IMR-90 (cell line): ENCODE measurements at regions of chr2 and their contacts with region 1.

Region 1: GRCh38 chr2:118865106-118865505 is 17.7 kb upstream of the EN1 start:
- DNase-seq: peak; percentile 46
- ATAC-seq: peak; percentile 92
- H3K4me3 ChIP-seq: no peak overlapping the region
- H3K27ac ChIP-seq: no peak overlapping the region
- H3K4me1 ChIP-seq: no peaks in the 10 kb centered on the region
- H3K27me3 ChIP-seq: peaks cover 20% of the 10 kb centered on the region
- CTCF ChIP-seq: peak; percentile 65
- POLR2A ChIP-seq: no peak
- RAD21 ChIP-seq: peak; percentile 70

Region 2: DNA sequence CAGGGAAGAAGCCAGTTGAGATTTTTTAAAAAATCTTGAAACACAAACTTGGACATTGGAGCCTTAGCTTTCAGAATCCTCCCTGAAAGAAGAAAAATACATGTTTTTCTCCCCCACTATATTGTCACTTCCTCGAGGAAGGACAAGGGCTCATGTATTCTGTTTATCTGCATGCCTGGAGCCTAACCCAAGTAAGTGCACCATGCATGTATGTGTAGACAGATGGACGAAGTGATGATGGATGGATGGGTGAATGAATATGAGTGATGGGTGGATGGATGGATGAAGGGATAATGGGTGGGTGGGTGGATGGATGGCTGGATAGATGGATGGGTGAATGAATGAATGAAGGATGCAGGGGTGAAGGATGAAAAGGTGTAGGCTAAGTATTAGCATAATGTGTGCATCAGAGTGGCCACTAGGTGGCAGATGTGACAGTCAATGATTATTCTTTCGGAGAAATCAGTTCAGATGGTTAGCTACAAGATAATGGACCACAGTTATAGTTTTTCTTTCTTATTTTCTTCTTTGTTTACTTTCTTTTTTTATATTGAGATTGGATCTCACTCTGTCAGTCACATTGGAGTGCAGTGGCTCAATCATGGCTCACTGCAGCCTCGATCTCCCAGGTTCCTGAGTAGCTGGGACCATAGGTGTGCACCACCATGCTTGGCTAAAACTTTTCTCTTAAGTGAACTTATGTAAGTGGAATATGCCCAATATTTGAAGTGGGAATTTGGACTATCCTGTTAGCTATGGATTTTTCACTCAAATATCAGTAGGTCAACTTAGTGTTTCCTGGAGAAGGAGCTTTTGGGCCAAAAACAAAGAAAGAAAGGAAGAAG is 832.7 kb before region 1 on chr2:
- CTCF ChIA-PET with region 1: no interaction called
- POLR2A ChIA-PET with region 1: no interaction called
- dilution Hi-C with region 1: no loop called
- in situ Hi-C with region 1: loop called (anchors 25 kb)
- intact Hi-C with region 1: loop called (anchors 1 kb)
- DNase-seq: peak; percentile 34
- ATAC-seq: peak; percentile 90
- H3K4me3 ChIP-seq: no peak overlapping the region
- H3K27ac ChIP-seq: no peak overlapping the region
- H3K4me1 ChIP-seq: no peaks in the 10 kb centered on the region
- H3K27me3 ChIP-seq: peaks cover 5% of the 10 kb centered on the region
- CTCF ChIP-seq: peak; percentile 69
- POLR2A ChIP-seq: no peak
- RAD21 ChIP-seq: peak; percentile 41

Region 3: GRCh38 chr2:118046634-118047210 is 818.4 kb before region 1 on chr2:
- CTCF ChIA-PET with region 1: no interaction called
- POLR2A ChIA-PET with region 1: no interaction called
- dilution Hi-C with region 1: no loop called
- in situ Hi-C with region 1: loop called (anchors 25 kb)
- intact Hi-C with region 1: loop called (anchors 2 kb)
- DNase-seq: peak; percentile 53
- ATAC-seq: peak; percentile 81
- H3K4me3 ChIP-seq: no peak overlapping the region
- H3K27ac ChIP-seq: no peak overlapping the region
- H3K4me1 ChIP-seq: no peaks in the 10 kb centered on the region
- H3K27me3 ChIP-seq: peaks cover 21% of the 10 kb centered on the region
- CTCF ChIP-seq: peak; percentile 69
- POLR2A ChIP-seq: no peak
- RAD21 ChIP-seq: peak; percentile 69

Region 4: GRCh38 chr2:118221666-118222594 is 643.2 kb before region 1 on chr2:
- CTCF ChIA-PET with region 1: no interaction called
- POLR2A ChIA-PET with region 1: no interaction called
- dilution Hi-C with region 1: no loop called
- in situ Hi-C with region 1: no loop called
- intact Hi-C with region 1: loop called (anchors 1 kb)
- DNase-seq: peak; percentile 76
- ATAC-seq: peak; percentile 96
- H3K4me3 ChIP-seq: no peak overlapping the region
- H3K27ac ChIP-seq: no peak overlapping the region
- H3K4me1 ChIP-seq: no peaks in the 10 kb centered on the region
- H3K27me3 ChIP-seq: peaks cover 43% of the 10 kb centered on the region
- CTCF ChIP-seq: peak; percentile 82
- POLR2A ChIP-seq: no peak
- RAD21 ChIP-seq: peak; percentile 77

Region 5: DNA sequence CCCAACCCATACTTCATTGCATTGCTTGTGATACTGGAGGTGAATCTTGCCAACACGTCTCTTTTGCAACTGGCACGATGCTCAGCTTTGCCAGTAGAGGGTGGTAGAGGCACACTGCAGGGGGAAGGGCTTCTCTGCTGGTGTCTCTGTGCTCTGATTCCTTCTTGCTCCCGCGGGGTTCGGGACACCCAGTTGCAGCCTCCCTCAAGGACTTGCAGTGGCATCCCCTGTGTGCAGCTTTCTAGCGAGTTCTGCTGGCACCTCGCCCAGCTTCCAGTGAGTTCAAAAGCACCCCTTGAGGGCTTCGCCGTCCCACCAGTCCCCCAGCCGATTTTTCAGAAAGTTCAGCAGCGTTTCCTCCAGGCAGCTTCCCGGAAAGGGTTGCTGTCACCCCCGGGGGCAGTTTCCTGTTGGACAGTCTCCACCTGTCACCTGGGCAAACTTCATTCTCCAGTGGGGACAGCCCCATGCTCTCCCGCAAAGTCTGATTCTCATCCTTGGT is 17.7 kb after region 1 on chr2:
- CTCF ChIA-PET with region 1: interaction called, 23 read pairs
- POLR2A ChIA-PET with region 1: no interaction called
- dilution Hi-C with region 1: no loop called
- in situ Hi-C with region 1: no loop called
- intact Hi-C with region 1: no loop called
- DNase-seq: peak; percentile 38
- ATAC-seq: peak; percentile 86
- H3K4me3 ChIP-seq: no peak overlapping the region
- H3K27ac ChIP-seq: no peak overlapping the region
- H3K4me1 ChIP-seq: no peaks in the 10 kb centered on the region
- H3K27me3 ChIP-seq: no peaks in the 10 kb centered on the region; the same call in 1 of the 2 replicates
- CTCF ChIP-seq: peak; percentile 72
- POLR2A ChIP-seq: no peak
- RAD21 ChIP-seq: peak; percentile 64

Region 6: DNA sequence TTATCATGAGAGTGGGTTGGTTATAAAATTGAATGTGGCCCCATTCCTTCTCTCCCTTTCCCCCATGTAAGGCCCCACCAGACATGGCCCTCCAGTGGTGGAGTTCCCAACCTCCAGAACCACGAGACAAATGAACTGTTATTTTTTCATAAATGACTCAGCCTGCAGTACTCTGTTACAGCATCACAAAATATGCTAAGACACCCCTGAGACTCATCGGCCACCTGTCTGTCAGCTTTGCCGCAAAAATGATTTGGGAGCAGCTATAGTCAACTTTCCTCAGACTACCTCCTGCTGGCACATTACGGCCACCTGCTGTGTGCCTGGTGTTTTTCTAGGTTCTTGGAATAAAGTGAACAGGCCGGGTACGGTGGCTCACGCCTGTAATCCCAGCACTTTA is 314.9 kb after region 1 on chr2:
- CTCF ChIA-PET with region 1: no interaction called
- POLR2A ChIA-PET with region 1: no interaction called
- dilution Hi-C with region 1: no loop called
- in situ Hi-C with region 1: no loop called
- intact Hi-C with region 1: no loop called
- DNase-seq: no peak
- ATAC-seq: peak; percentile 52; the same call in 1 of the 2 replicates
- H3K4me3 ChIP-seq: no peak overlapping the region
- H3K27ac ChIP-seq: no peak overlapping the region
- H3K4me1 ChIP-seq: no peaks in the 10 kb centered on the region
- H3K27me3 ChIP-seq: peaks cover 2% of the 10 kb centered on the region; the same call in 1 of the 2 replicates
- CTCF ChIP-seq: no peak
- POLR2A ChIP-seq: no peak
- RAD21 ChIP-seq: no peak